ENCODE measurements at regions of chr9 and their contacts with region 1.

Region 1: GRCh38 chr9:105610381-105610780 is 51.9 kb upstream of the TAL2 start:
- DNase-seq: no peak
- ATAC-seq: no peak
- H3K4me3 ChIP-seq: no peak overlapping the region
- H3K27ac ChIP-seq: no peak overlapping the region
- H3K4me1 ChIP-seq: no peaks in the 10 kb centered on the region
- H3K27me3 ChIP-seq: no peaks in the 10 kb centered on the region
- CTCF ChIP-seq: no peak
- POLR2A ChIP-seq: no peak

Region 2: DNA sequence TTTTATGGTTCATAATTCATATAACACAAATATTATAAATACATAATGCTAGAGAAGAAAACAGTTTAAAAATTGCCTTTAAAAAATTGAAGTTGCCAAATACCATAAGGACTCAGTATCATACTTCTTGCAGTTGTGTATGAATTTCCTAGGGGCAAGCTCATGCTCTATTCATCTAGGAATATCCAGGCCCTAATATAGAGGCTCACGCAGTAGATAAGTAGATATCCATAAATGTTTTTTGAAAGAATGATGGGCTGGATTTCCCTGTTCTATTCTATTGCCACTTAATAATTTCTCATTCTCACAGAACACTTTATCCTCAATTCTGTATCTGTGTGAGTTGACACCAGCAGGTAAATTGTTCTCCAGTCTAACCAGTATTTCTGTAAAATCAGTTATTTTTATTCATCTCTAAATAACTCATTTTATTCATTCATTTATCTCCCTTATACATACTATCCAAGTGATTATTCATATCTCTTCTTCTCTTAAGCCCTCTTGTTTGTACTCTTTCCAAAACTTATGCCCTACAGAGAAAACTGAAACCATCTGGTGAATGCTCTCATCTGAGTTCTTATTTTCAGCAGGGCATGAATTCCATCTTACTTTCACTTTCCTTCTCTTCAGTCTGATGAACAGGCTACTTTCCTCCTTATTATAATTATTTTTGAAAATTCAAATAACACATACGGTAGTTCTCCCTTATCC is 268.8 kb before region 1 on chr9:
- intact Hi-C with region 1: no loop called
- DNase-seq: no peak
- ATAC-seq: peak; percentile 60 to 83 (median 71)
- H3K4me3 ChIP-seq: no peak overlapping the region
- H3K27ac ChIP-seq: peak overlapping the region in 1 of 3 donors; percentile 1
- H3K4me1 ChIP-seq: peaks cover 0 to 19% (median 2%) of the 10 kb centered on the region in 4 donors
- H3K27me3 ChIP-seq: no peaks in the 10 kb centered on the region
- CTCF ChIP-seq: no peak
- POLR2A ChIP-seq: no peak

Region 3: DNA sequence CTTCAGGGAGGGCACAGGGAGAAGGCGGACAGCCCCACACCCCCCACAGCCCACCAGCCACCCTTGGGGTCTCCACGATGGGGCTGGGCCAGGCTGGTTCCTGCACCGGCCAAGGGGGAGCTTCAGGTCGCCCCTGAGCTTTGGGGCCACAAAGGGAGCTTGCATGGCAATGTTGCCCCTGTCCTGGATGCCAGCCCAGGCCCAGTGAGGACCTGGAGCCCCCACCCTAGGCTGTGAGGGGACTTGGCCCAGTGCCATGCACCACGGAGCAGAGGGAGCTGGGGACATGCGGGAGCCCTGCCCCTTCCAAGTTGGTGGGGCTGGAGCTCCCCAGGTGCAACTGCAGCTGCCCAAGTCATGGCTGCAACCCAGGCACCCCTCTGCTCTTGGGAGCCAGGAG is 102.4 kb after region 1 on chr9:
- intact Hi-C with region 1: loop called in 1 of 2 experiments (anchors 10 kb)
- DNase-seq: peak in 2 of 3 donors; percentile 42 to 52
- ATAC-seq: no peak
- H3K4me3 ChIP-seq: no peak overlapping the region
- H3K27ac ChIP-seq: no peak overlapping the region
- H3K4me1 ChIP-seq: no peaks in the 10 kb centered on the region
- H3K27me3 ChIP-seq: no peaks in the 10 kb centered on the region
- CTCF ChIP-seq: no peak
- POLR2A ChIP-seq: no peak

Region 4: DNA sequence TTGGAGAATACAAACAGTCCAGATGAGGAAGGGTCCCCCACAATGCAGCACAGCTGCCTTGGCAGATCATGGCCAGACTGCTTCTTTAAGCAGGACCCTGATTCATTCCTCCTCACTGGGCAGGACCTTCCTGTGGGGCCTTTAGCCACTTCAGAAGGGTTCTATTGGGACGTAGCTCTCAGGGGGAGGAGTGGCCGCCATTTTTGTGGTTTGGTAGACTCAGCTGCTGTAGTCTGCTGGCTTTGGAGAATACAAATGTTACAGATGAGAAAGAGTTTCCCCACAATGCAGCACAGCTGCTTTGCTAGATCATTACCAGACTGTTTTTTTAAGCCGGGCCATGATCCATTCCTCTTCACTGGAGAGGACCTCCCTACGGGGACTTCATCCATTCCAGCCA is 141.4 kb after region 1 on chr9:
- intact Hi-C with region 1: no loop called
- DNase-seq: no peak
- ATAC-seq: no peak
- H3K4me3 ChIP-seq: no peak overlapping the region
- H3K27ac ChIP-seq: no peak overlapping the region
- H3K4me1 ChIP-seq: no peaks in the 10 kb centered on the region
- H3K27me3 ChIP-seq: no peaks in the 10 kb centered on the region
- CTCF ChIP-seq: no peak
- POLR2A ChIP-seq: no peak

Region 5: GRCh38 chr9:105877721-105878120 is 267.3 kb after region 1 on chr9:
- intact Hi-C with region 1: loop called in 1 of 2 experiments (anchors 10 kb)
- DNase-seq: no peak
- ATAC-seq: no peak
- H3K4me3 ChIP-seq: no peak overlapping the region
- H3K27ac ChIP-seq: no peak overlapping the region
- H3K4me1 ChIP-seq: no peaks in the 10 kb centered on the region
- H3K27me3 ChIP-seq: no peaks in the 10 kb centered on the region
- CTCF ChIP-seq: no peak
- POLR2A ChIP-seq: no peak